A673 (cell line): ENCODE measurements at regions of chr22 and their contacts with region 1.

Region 1: DNA sequence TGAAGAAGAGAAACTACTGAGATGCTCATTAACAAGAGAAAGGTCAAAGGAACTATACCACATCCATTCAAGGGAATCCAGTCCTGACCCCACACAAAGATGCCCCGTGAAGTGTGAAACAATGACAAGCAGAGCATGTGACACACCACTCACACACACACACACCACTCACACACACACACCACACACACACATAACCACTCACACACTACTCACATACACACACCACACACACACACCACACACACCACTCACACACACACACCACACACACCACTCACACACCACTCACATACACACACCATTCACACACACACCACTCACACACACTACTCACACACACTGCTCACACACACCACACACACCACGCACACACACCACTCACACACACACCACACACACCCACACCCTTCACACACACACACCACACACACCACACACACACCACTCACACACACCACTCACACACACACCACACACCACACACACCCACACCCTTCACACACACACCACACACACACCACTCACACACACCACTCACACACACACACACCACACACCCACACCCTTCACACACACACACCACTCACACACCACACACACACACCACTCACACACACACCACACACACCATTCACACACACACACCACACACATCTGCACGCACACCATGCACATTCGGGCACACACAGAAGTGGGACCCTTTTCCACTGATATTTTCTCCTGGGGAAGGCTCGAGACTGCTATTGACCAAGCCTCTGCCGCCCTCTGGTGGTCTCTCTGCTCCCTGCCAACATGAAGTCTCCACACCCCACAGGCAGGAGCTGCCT is 32.0 kb upstream of the COMT start:
- DNase-seq: peak; percentile 86
- H3K4me3 ChIP-seq: no peak overlapping the region
- H3K27ac ChIP-seq: no peak overlapping the region
- H3K4me1 ChIP-seq: no peaks in the 10 kb centered on the region
- H3K27me3 ChIP-seq: no peaks in the 10 kb centered on the region
- CTCF ChIP-seq: peak; percentile 98

Region 2: GRCh38 chr22:19596680-19597398 is 312.7 kb before region 1 on chr22:
- CTCF ChIA-PET with region 1: no interaction called
- POLR2A ChIA-PET with region 1: no interaction called
- intact Hi-C with region 1: no loop called
- DNase-seq: peak; percentile 19
- H3K4me3 ChIP-seq: no peak overlapping the region
- H3K27ac ChIP-seq: no peak overlapping the region
- H3K4me1 ChIP-seq: peaks cover 3% of the 10 kb centered on the region
- H3K27me3 ChIP-seq: no peaks in the 10 kb centered on the region
- CTCF ChIP-seq: no peak

Region 3: GRCh38 chr22:19756288-19757128 is 153.1 kb before region 1 on chr22:
- CTCF ChIA-PET with region 1: interaction called, 10 read pairs
- POLR2A ChIA-PET with region 1: no interaction called
- intact Hi-C with region 1: no loop called
- DNase-seq: peak; percentile 40
- H3K4me3 ChIP-seq: no peak overlapping the region
- H3K27ac ChIP-seq: no peak overlapping the region
- H3K4me1 ChIP-seq: peaks cover 15% of the 10 kb centered on the region
- H3K27me3 ChIP-seq: peaks cover 54% of the 10 kb centered on the region
- CTCF ChIP-seq: peak; percentile 52

Region 4: DNA sequence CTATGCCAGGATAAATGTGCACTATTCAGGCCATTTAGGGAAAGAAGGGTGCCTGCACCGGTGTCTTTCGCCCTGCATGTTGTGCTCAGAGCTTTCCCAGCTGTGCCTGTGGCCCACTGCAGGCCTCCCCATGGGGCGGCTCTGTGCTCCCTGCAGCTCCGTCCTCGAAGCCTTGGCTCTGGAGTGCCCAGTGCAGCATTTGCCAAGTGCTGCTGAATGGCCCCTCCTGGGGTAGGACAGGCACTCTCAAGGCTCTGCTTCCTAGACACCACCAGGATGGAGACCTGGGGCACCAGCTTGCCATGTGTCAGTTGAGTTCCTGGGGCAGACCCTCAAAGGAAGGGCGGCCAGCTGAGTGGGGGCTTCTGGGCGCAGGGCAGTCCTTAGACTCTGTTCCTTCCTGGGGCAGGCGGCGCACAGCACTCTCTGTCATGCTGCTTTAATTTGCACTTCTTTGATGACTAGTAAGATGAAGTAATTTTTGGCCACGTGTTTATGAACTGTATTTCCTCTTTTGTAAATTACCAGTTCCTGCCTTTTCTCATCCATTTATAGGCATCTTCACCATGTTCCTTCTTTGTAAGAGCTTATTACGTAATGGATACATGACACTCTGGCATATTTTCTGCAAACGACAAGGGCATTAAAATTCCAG is 22.8 kb before region 1 on chr22:
- CTCF ChIA-PET with region 1: no interaction called
- POLR2A ChIA-PET with region 1: no interaction called
- intact Hi-C with region 1: no loop called
- DNase-seq: peak; percentile 87
- H3K4me3 ChIP-seq: no peak overlapping the region
- H3K27ac ChIP-seq: peak overlapping the region; percentile 89
- H3K4me1 ChIP-seq: peaks cover 57% of the 10 kb centered on the region
- H3K27me3 ChIP-seq: no peaks in the 10 kb centered on the region
- CTCF ChIP-seq: no peak

Region 5: DNA sequence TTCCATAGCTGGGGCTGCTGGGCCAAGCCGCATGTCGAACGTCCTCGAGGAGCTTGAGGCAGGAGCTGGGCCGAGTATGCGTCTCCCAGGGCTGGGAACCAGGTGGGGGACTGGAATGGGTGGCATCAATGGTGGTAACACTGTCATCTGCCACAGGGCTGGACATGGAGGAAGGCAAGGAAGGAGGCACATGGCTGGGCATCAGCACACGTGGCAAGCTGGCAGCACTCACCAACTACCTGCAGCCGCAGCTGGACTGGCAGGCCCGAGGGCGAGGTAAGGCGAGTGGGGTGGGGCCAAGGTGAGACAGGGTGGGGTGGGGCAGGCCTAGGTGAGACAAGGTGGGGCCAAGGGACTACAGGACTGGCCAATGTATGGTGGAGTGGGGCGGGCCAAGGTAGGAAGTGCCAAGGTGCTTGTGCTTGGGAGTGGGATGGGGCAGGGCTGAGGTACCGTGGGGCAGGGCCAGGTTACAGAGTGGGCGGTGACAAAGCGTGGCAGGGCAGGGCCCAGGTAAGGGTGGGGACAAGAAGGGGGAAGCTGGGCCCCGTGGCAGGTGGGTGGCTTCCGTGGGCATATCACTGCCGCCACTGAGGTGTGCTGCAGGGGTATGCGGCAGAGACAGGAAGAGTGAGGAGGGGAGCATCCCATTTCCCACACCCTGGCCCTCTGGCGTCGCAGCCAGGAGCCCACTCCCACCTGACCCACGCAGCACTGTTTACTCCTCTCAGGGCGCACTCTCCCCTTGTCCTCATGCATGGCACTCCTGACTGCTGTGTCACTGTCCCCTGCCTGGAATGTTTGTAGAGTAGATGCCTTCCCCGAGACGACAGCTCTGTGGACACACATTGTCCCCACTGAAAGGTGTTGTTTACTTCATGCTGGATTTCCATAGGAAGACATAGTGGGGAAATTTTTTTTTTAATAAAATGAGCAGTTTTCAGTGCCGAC is 143.0 kb after region 1 on chr22:
- CTCF ChIA-PET with region 1: interaction called, 17 read pairs
- POLR2A ChIA-PET with region 1: no interaction called
- intact Hi-C with region 1: no loop called
- DNase-seq: no peak
- H3K4me3 ChIP-seq: no peak overlapping the region
- H3K27ac ChIP-seq: no peak overlapping the region
- H3K4me1 ChIP-seq: no peaks in the 10 kb centered on the region
- H3K27me3 ChIP-seq: no peaks in the 10 kb centered on the region
- CTCF ChIP-seq: no peak